Mammary epithelial cell (primary cell): ENCODE measurements at regions of chr12 and their contacts with region 1.

Region 1: DNA sequence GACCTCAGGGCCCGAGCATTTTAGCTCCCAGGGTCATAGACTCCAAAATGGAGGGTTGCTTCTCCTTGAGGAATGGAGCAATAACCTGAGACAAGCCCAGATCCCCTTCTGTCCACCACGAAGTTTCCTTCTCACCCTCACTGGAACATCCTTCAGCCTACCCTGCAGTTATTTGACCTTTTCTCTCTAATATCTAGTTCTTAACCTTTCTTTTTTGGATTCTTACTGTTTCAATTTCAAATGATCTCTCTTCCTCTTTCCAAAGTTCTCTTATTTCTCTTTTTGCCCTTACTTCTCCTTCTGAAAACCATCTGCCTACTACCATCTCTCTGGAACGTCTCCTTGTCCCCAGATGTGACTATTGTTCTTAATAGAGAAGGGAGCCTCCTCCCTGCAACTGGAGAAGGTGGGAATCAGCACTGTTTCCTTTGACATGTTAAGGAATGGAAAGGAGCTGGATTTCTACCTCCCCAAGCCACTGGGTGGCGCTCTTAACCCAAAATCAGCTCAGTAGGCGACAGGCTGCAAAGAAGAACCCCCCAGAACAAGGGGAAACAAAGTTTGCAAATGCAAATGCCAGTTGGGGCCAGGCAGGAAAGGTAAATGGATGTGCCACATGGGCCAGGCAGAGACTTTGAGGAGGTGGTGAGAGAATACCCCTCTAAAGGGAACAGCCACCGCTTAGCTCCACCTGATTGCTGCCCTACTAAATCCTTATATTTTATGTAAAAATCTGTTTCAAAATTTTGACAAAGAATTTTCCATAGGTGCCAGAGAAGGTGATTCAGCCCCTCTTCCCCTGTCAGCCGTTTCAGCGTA is 22.4 kb upstream of the PDE1B start:
- DNase-seq: peak; percentile 14
- H3K4me3 ChIP-seq: no peak overlapping the region
- H3K27ac ChIP-seq: no peak overlapping the region
- H3K4me1 ChIP-seq: no peaks in the 10 kb centered on the region
- H3K27me3 ChIP-seq: peaks cover 8% of the 10 kb centered on the region
- CTCF ChIP-seq: peak; percentile 82

Region 2: GRCh38 chr12:54489857-54490256 is 37.2 kb before region 1 on chr12:
- CTCF ChIA-PET with region 1: no interaction called
- dilution Hi-C with region 1: loop called (anchors 5 kb)
- in situ Hi-C with region 1: no loop called
- intact Hi-C with region 1: no loop called
- DNase-seq: no peak
- H3K4me3 ChIP-seq: no peak overlapping the region
- H3K27ac ChIP-seq: no peak overlapping the region
- H3K4me1 ChIP-seq: no peaks in the 10 kb centered on the region
- H3K27me3 ChIP-seq: no peaks in the 10 kb centered on the region
- CTCF ChIP-seq: no peak

Region 3: GRCh38 chr12:54571193-54572188 is 44.5 kb after region 1 on chr12:
- CTCF ChIA-PET with region 1: no interaction called
- dilution Hi-C with region 1: no loop called
- in situ Hi-C with region 1: no loop called
- intact Hi-C with region 1: loop called (anchors 2 kb)
- DNase-seq: no peak
- H3K4me3 ChIP-seq: no peak overlapping the region
- H3K27ac ChIP-seq: no peak overlapping the region
- H3K4me1 ChIP-seq: no peaks in the 10 kb centered on the region
- H3K27me3 ChIP-seq: no peaks in the 10 kb centered on the region
- CTCF ChIP-seq: no peak

Region 4: DNA sequence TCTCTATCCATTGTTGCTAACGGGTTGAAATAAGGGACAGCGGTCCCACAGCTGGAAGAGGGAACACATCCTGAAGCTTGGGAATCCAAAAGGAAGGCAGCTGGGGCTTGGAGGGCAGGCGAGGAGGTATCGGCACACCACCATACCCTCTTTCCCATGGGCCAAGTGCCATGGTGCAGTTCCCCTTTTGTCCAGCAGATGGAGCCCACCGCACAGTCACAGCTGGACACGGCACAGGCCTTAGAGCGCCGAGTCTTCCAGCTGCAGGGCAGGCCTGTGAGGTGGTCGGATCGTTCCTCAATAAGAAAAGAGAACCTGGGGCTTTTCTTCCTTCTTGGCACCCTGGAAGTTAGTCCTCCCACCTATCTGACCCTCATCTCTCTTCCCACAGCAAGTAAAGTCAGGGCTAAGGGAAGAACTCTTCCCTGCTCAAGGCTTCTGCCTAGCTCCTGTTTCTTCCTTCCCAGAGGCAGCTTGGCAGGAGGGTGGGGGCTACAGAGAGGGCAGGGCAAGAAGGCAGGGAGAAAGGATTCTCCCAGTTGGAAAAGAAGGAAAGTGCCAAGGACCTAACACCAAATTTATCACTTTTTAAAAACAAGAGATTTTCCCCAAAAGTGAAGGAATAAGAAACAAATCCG is 52.8 kb after region 1 on chr12:
- CTCF ChIA-PET with region 1: no interaction called
- dilution Hi-C with region 1: no loop called
- in situ Hi-C with region 1: no loop called
- intact Hi-C with region 1: loop called (anchors 1 kb)
- DNase-seq: peak; percentile 59
- H3K4me3 ChIP-seq: no peak overlapping the region
- H3K27ac ChIP-seq: no peak overlapping the region
- H3K4me1 ChIP-seq: no peaks in the 10 kb centered on the region
- H3K27me3 ChIP-seq: peaks cover 4% of the 10 kb centered on the region
- CTCF ChIP-seq: peak; percentile 99

Region 5: DNA sequence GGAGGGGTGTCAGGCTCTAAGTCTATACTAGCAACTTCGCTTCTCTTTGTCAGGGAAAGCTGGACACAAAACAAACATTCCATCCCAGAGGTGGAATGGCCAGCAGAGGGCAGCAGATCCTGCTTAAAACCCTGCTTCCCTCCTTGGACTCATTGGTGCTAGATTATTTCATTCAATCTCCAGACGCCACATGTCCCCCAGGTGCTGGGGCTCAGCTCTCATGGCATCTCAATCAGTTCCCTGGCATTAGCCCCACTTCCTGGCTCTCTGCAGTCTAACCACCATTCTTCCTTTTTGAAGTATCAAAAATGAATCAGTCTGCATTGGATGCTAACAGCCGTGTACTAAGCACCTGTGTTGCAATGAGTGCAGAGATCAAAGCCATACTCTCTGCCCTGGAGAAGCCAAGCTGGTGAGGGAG is 69.5 kb after region 1 on chr12:
- CTCF ChIA-PET with region 1: interaction called, 15 read pairs
- dilution Hi-C with region 1: no loop called
- in situ Hi-C with region 1: no loop called
- intact Hi-C with region 1: no loop called
- DNase-seq: peak; percentile 43
- H3K4me3 ChIP-seq: no peak overlapping the region
- H3K27ac ChIP-seq: no peak overlapping the region
- H3K4me1 ChIP-seq: no peaks in the 10 kb centered on the region
- H3K27me3 ChIP-seq: peaks cover 5% of the 10 kb centered on the region
- CTCF ChIP-seq: peak; percentile 87 to 95